PC-9 (cell line): ENCODE measurements at regions of chr12 and their contacts with region 1.

Region 1: DNA sequence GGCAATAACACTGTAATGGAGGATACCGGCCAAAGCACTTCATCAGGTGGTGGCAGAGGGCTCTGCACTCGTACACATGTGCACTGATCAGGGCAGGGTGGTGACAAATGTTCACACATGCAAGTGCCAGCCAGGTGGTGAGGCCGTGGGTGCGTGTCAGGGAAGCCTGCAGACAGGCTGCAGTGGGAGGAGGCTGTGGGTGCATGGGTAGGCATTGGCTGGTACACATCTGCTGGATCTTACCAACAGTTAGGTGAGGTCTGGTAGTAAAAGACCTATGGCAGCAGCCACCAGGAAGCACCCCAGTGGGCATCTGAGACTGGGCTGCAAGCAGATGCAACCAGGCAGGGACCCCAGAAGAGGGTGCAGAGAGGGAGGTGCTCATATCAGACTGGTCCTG is 65.3 kb downstream of the PDE6H start:
- DNase-seq: no peak
- H3K4me3 ChIP-seq: no peak overlapping the region
- H3K27ac ChIP-seq: no peak overlapping the region
- H3K4me1 ChIP-seq: no peaks in the 10 kb centered on the region
- H3K27me3 ChIP-seq: no peaks in the 10 kb centered on the region
- CTCF ChIP-seq: no peak

Region 2: GRCh38 chr12:14970473-14970872 is 67.7 kb before region 1 on chr12:
- CTCF ChIA-PET with region 1: no interaction called
- POLR2A ChIA-PET with region 1: no interaction called
- intact Hi-C with region 1: no loop called
- DNase-seq: no peak
- H3K4me3 ChIP-seq: no peak overlapping the region
- H3K27ac ChIP-seq: no peak overlapping the region
- H3K4me1 ChIP-seq: no peaks in the 10 kb centered on the region
- H3K27me3 ChIP-seq: no peaks in the 10 kb centered on the region
- CTCF ChIP-seq: no peak

Region 3: GRCh38 chr12:14981049-14981448 is 57.1 kb before region 1 on chr12:
- CTCF ChIA-PET with region 1: no interaction called
- POLR2A ChIA-PET with region 1: interaction called, 12 read pairs
- intact Hi-C with region 1: no loop called
- DNase-seq: no peak
- H3K4me3 ChIP-seq: no peak overlapping the region
- H3K27ac ChIP-seq: no peak overlapping the region
- H3K4me1 ChIP-seq: no peaks in the 10 kb centered on the region
- H3K27me3 ChIP-seq: no peaks in the 10 kb centered on the region
- CTCF ChIP-seq: no peak